ENCODE measurements at regions of chrX and their contacts with region 1.

Region 1: DNA sequence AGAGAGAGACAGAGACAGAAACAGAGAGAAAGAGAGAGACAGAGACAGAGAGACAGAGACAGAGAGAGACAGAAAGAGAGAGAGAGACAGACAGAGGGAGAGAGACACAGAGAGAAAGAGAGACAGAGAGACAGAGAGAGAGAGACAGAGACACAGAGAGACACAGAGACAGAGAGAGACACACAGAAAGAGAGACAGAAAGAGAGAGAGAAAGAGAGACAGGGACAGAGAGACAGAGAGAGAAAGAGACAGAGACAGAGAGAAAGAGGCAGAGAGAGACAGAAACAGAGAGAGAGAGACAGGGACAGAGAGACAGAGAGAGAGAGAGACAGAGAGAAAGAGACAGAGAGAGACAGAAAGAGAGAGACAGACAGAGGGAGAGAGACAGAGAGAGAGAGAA is 52.9 kb downstream of the CRLF2 start:
- DNase-seq: no peak
- ATAC-seq: no peak
- H3K4me3 Mint-ChIP-seq: no peak overlapping the region
- H3K27ac Mint-ChIP-seq: no peak overlapping the region
- H3K4me1 Mint-ChIP-seq: peaks cover 2% of the 10 kb centered on the region
- H3K27me3 Mint-ChIP-seq: peaks cover 2% of the 10 kb centered on the region

Region 2: GRCh38 chrX:427812-428725 is 731.5 kb before region 1 on chrX:
- CTCF ChIA-PET with region 1: no interaction called
- POLR2A ChIA-PET with region 1: no interaction called
- intact Hi-C with region 1: loop called in 1 of 2 experiments (anchors 5 kb)
- DNase-seq: peak; percentile 43
- ATAC-seq: peak; percentile 55
- H3K4me3 Mint-ChIP-seq: peak overlapping the region; percentile 39
- H3K27ac Mint-ChIP-seq: no peak overlapping the region
- H3K4me1 Mint-ChIP-seq: peaks cover 3% of the 10 kb centered on the region
- H3K27me3 Mint-ChIP-seq: peaks cover 27% of the 10 kb centered on the region

Region 3: GRCh38 chrX:1580735-1581531 is 421.4 kb after region 1 on chrX:
- CTCF ChIA-PET with region 1: no interaction called
- POLR2A ChIA-PET with region 1: no interaction called
- intact Hi-C with region 1: no loop called
- DNase-seq: peak; percentile 90
- ATAC-seq: peak; percentile 78
- H3K4me3 Mint-ChIP-seq: no peak overlapping the region
- H3K27ac Mint-ChIP-seq: no peak overlapping the region
- H3K4me1 Mint-ChIP-seq: peaks cover 19% of the 10 kb centered on the region
- H3K27me3 Mint-ChIP-seq: no peaks in the 10 kb centered on the region